H1 (cell line): ENCODE measurements at regions of chr11 and their contacts with region 1.

Region 1: GRCh38 chr11:63768237-63769043 is at the start of gene ZFTA:
- DNase-seq: peak in 1 of 2 experiments; percentile 90
- H3K4me3 ChIP-seq: peak within 1 kb of the TSS; percentile 57 to 96 (median 82)
- H3K27ac ChIP-seq: peak within 1 kb of the TSS; percentile 83; the same call in 1 of the 2 replicates
- H3K4me1 ChIP-seq: peaks cover 5 to 33% (median 26%) of the 10 kb centered on the region in 4 experiments
- H3K27me3 ChIP-seq: peaks cover 0 to 16% (median 13%) of the 10 kb centered on the region in 4 experiments; a peak in 6 of 7 replicates
- CTCF ChIP-seq: peak in 2 of 3 experiments; percentile 55 to 73; a peak in 3 of 4 replicates
- EP300 ChIP-seq: no peak
- POLR2A ChIP-seq: peak in 1 of 2 experiments; percentile 23; a peak in 1 of 3 replicates
- RAD21 ChIP-seq: peak; percentile 55 to 78; a peak in 3 of 4 replicates
- total RNA-seq, gene ZFTA: 33.8 and 34.0 TPM in 2 replicates

Region 2: DNA sequence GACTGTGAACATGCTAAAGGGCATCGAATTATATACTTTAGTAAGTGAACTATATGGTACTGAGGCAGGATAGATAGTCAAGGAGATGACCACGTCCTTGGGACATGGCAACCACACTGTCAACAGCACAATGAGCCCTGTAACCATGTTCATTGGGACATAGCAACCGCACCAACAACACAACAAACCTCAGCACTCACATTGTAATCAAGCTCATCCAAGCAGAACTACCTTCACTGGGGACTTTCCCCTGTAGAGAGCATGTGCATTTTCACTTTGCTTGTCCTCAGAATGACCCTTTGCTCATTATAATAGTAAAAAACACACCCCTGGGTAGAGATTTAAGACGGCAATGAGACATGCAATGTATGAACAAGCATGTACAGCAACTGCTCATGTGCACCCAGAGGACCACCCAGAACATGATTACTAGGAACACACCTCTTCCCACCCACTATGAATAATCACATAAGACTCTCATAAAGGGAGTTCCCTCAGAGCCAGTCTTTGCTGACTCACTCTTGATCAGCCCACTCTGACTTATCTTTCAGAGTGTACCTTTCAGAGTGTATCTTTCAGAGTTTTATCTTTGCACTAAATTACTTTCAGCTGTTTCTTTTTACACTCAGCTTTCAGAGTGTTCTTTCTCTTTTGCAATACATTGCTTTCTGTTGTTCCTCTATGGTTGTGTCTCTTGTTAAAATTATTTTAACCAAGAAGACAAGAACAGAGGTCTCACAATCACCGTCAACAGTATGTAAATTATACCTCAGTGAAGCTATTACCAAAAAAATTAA is 201.2 kb before region 1 on chr11:
- CTCF ChIA-PET with region 1: no interaction called
- POLR2A ChIA-PET with region 1: no interaction called
- DNase-seq: no peak
- H3K4me3 ChIP-seq: no peak overlapping the region
- H3K27ac ChIP-seq: peak overlapping the region; percentile 19; the same call in 1 of the 2 replicates
- H3K4me1 ChIP-seq: peaks cover 0 to 5% (median 3%) of the 10 kb centered on the region in 4 experiments; a peak in 3 of 7 replicates
- H3K27me3 ChIP-seq: no peaks in the 10 kb centered on the region
- CTCF ChIP-seq: no peak
- EP300 ChIP-seq: peak in 1 of 2 experiments; percentile 75; a peak in 1 of 3 replicates
- POLR2A ChIP-seq: no peak
- RAD21 ChIP-seq: no peak

Region 3: GRCh38 chr11:63779039-63779438 is 10.6 kb after region 1 on chr11:
- CTCF ChIA-PET with region 1: interaction called, 9 read pairs
- POLR2A ChIA-PET with region 1: interaction called, 21 read pairs
- DNase-seq: no peak
- H3K4me3 ChIP-seq: no peak overlapping the region
- H3K27ac ChIP-seq: no peak overlapping the region
- H3K4me1 ChIP-seq: peaks cover 0 to under 1% (median under 1%) of the 10 kb centered on the region in 4 experiments; a peak in 2 of 7 replicates
- H3K27me3 ChIP-seq: no peaks in the 10 kb centered on the region
- CTCF ChIP-seq: no peak
- EP300 ChIP-seq: no peak
- POLR2A ChIP-seq: no peak
- RAD21 ChIP-seq: no peak

Region 4: DNA sequence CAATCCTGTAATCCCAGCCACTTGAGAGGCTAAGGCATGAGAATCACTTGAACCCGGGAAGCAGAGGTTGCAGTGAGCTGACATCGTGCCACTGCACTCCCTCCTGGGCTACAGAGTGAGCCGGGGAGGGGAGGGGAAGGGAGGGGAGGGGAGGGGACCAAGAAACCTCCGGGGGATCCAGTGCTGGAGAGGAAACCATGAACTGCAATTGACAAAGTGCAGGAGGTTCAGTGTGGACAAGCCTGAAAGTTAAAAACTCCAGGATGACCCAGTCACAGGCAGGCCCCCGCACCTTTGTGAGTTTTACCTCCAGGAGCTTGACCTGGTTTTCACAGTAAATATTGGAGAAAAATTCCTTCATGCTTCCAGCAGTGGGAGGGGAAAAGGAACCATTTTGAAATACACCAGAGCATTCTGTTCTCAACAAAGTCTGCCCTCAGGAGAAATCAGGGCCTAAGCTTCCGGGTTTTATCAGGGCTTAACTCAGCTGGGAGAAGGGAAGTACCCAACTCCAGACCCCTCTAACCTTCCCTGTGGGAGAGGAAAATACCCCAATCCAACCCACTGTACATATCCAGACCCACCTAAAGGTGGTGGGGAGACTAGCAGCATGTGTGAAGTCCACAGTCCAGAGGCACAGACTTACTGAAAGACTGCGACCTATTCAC is 15.6 kb after region 1 on chr11:
- CTCF ChIA-PET with region 1: interaction called, 9 read pairs
- POLR2A ChIA-PET with region 1: interaction called, 21 read pairs
- DNase-seq: no peak
- H3K4me3 ChIP-seq: no peak overlapping the region
- H3K27ac ChIP-seq: 0 out of 2 replicates have a peak overlapping the region, but pooled peaks have one; percentile 6
- H3K4me1 ChIP-seq: peaks cover 2 to 5% (median 4%) of the 10 kb centered on the region in 4 experiments; a peak in 4 of 7 replicates
- H3K27me3 ChIP-seq: no peaks in the 10 kb centered on the region
- CTCF ChIP-seq: no peak
- EP300 ChIP-seq: no peak
- POLR2A ChIP-seq: no peak
- RAD21 ChIP-seq: no peak

Region 5: DNA sequence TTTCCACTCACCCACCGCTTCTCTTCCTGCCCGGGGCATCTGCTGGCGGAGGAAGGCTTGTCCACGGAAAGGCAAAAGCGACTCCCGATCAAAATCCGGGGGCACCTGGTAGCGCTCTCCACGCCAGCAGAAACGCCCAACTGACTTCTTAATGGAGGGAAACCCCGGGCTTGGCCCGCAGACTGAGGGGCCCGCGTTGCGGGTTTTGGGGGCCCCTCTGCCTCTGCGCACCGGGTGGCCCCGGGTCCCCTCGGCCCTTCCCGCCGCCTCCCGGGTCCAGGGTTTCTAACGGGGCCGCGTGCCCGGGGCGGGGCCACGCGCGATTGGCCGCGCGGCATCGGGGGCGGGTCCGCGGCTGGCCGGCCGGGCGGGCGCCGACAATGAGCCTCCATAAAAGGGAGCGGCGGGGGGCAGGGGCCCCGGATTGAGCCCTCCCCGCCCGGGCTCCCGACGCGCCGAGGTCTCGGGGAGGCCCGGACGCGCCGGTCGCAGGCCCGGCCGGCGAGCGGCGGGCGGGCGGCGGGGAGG is 44.7 kb after region 1 on chr11 and contains the start of gene SPINDOC:
- CTCF ChIA-PET with region 1: interaction called, 5 read pairs
- POLR2A ChIA-PET with region 1: interaction called, 30 read pairs
- DNase-seq: peak in 1 of 2 experiments; percentile 88
- H3K4me3 ChIP-seq: peak within 1 kb of the TSS; percentile 79 to 91 (median 90)
- H3K27ac ChIP-seq: peak within 1 kb of the TSS; percentile 92
- H3K4me1 ChIP-seq: peaks cover 4 to 20% (median 12%) of the 10 kb centered on the region in 4 experiments; a peak in 6 of 7 replicates
- H3K27me3 ChIP-seq: no peaks in the 10 kb centered on the region; a peak in 1 of 7 replicates
- CTCF ChIP-seq: no peak
- EP300 ChIP-seq: no peak
- POLR2A ChIP-seq: no peak
- RAD21 ChIP-seq: no peak
- total RNA-seq, gene SPINDOC: 99.7 and 104 TPM in 2 replicates